Heart right ventricle (tissue), 16 donors: ENCODE measurements at regions of chr5 and their contacts with region 1.

Region 1: DNA sequence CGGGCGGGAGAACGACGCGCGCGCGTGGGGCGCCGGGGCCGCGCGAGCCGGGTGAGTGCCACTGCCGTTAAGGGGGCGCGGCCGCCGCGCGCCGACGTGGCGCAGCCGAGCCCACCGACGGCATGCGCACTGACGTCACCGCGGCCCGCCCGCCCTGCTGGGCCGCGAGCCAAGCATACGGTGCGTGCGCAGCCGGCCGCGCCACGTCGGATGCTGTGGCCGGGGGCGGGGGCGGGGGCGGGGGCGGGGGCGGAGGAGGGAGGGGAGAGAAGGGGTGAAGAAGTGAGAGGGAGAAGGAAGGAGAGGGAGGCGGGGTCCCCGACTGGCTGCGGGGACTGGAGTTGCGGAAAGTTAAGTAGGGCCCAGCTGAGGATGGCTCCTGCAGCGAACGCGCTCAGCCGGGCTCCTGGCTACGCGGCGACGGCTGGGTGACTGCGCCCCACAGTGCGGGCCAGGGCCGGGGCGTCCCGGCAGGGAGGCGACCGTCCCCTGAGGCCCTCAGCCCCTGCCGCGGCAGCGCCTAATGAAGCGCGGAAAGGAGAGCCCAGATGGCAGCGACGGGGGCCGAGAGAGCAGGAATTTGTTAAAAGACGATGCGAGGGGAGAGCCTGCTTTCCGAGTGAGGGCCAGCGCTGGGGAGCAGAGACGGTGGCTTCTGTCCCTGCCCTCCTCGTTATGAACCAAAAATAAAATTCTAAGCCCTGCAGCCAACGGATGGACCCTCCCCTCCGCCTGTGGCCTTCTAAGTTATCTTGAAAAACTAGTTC is at the start of gene DAP:
- DNase-seq: peak; percentile 78 to 90
- ATAC-seq: peak; percentile 84 to 95 (median 90)
- H3K4me3 ChIP-seq: peak within 1 kb of the TSS; percentile 47 to 77 (median 70)
- H3K27ac ChIP-seq: peak within 1 kb of the TSS; percentile 84 to 99 (median 96)
- H3K4me1 ChIP-seq: peaks cover 0 to 56% (median 33%) of the 10 kb centered on the region in 9 donors
- H3K27me3 ChIP-seq: no peaks in the 10 kb centered on the region
- CTCF ChIP-seq: peak in 1 of 9 donors; percentile 11
- total RNA-seq, gene DAP: 20.6 to 52.5 (median 28.0) TPM

Region 2: DNA sequence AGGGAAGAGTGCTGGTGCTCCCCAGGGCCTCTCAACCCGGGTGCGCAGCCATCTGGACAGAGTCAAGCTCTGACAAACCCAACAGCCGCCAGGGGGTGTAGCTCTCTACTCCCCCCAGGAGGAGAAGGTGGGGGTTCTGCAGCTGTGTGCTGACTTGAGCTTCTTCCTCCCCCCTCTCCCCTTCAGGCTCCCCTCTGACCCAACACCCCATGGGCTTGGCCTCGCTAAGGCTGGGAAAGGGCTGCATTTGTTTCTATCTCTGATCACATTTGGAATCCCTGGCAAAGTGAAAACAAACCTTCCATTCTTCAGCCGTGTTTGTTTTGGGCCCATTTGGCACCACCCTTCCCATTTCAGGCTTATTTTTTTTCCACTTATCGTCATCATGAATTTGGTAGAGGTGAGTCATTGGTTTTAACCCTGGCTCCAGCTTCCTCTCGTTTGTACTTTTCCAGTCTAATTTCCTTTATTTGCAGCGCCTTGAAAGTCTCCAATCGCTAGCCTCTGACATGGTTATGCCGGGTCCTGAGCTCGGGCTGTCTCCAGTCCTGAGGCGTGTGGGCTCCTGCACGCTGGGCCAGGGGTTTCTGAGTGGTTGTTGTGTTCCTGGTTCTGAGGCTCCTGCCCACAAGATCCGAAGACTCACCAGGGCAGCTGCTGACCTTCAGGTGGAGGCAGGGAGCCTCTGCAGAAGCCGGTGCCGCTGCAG is 36.4 kb before region 1 on chr5:
- intact Hi-C with region 1: loop called in 3 of 10 experiments (anchors 2 to 5 kb)
- DNase-seq: peak; percentile 73 to 74
- ATAC-seq: peak; percentile 77 to 91 (median 88)
- H3K4me3 ChIP-seq: peak overlapping the region in 6 of 10 donors; percentile 2 to 27 (median 11)
- H3K27ac ChIP-seq: peak overlapping the region; percentile 8 to 86 (median 80)
- H3K4me1 ChIP-seq: peaks cover 0 to 53% (median 40%) of the 10 kb centered on the region in 9 donors
- H3K27me3 ChIP-seq: no peaks in the 10 kb centered on the region
- CTCF ChIP-seq: peak in 7 of 9 donors; percentile 35 to 64 (median 37)

Region 3: GRCh38 chr5:10789021-10789420 is 27.7 kb after region 1 on chr5:
- intact Hi-C with region 1: no loop called
- DNase-seq: peak in 1 of 2 donors; percentile 11
- ATAC-seq: peak in 4 of 8 donors; percentile 38 to 69 (median 68)
- H3K4me3 ChIP-seq: no peak overlapping the region
- H3K27ac ChIP-seq: no peak overlapping the region
- H3K4me1 ChIP-seq: peaks cover 0 to 19% (median 3%) of the 10 kb centered on the region in 9 donors
- H3K27me3 ChIP-seq: no peaks in the 10 kb centered on the region
- CTCF ChIP-seq: no peak